Activated CD8-positive, alpha-beta T cell treated with anti-CD3 and anti-CD28 coated beads, Interleukin-2, amount 10 ng/mL, durations not matched to agents 7 days and 5 days (primary cell): ENCODE measurements at regions of chrX and their contacts with region 1.

Region 1: GRCh38 chrX:10119399-10119990 is 37.3 kb upstream of the CLCN4 start:
- DNase-seq: peak; percentile 80
- ATAC-seq: peak; percentile 62
- H3K4me3 Mint-ChIP-seq: no peak overlapping the region
- H3K27ac Mint-ChIP-seq: no peak overlapping the region
- H3K4me1 Mint-ChIP-seq: peaks cover 25% of the 10 kb centered on the region
- H3K27me3 Mint-ChIP-seq: no peaks in the 10 kb centered on the region

Region 2: DNA sequence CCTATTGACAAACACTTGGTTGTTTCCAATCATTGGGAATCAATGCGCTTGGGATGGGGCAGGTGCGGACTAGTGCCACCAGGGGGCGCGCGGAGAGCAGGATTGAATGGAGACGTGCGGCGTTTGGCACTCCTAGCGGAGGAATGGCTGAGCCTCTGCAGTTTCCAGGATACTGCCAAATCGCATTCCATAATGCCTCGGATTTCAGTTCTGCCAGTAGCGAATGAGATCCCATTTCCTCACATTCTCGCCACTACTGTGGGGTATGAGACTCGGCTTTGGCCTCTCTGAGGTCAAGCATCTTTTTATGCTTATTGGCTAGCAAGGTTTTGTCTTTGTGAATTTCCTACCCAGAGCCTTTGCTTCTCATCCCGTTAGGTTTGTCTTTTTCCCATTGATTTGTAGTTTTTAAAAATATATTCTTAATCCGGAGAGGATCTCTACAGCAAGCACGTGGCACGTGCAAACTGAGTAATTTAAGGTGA is 123.6 kb before region 1 on chrX:
- CTCF ChIA-PET with region 1: interaction called, 70 read pairs
- POLR2A ChIA-PET with region 1: interaction called, 3 read pairs
- DNase-seq: peak; percentile 77
- ATAC-seq: peak; percentile 82
- H3K4me3 Mint-ChIP-seq: no peak overlapping the region
- H3K27ac Mint-ChIP-seq: no peak overlapping the region
- H3K4me1 Mint-ChIP-seq: no peaks in the 10 kb centered on the region
- H3K27me3 Mint-ChIP-seq: no peaks in the 10 kb centered on the region

Region 3: DNA sequence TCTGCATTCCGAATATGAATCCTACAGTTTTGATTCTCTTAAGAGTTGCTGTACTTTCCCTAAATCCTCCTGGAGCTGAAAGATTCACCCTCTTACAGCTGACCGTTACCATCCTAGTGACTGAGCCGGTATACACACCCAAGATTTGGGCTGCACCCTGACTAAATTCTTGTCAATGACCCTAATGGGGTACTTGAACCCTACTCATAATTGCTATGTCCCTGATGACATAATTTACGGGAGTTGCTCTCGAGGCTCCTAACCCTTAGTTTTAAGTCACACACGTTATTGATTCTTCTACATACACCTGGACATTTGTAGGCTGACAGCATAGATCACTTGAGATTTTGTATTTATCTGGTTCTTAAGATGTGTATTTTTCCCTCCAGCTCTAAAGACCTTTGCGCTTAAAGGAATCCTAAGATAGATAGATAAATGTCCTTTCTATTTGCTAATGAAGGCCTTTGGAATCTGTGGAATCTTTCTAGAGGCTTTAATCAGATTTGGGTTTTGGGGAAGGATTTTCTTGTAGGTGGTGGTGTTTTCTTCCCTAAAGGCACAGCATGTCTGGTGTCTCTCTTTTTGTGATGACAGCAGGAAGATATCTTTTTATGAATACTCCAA is 114.5 kb before region 1 on chrX:
- CTCF ChIA-PET with region 1: interaction called, 70 read pairs
- POLR2A ChIA-PET with region 1: interaction called, 3 read pairs
- DNase-seq: no peak
- ATAC-seq: no peak
- H3K4me3 Mint-ChIP-seq: no peak overlapping the region
- H3K27ac Mint-ChIP-seq: no peak overlapping the region
- H3K4me1 Mint-ChIP-seq: peaks cover 10% of the 10 kb centered on the region
- H3K27me3 Mint-ChIP-seq: peaks cover 2% of the 10 kb centered on the region

Region 4: GRCh38 chrX:10015726-10016518 is 103.6 kb before region 1 on chrX:
- CTCF ChIA-PET with region 1: interaction called, 22 read pairs
- POLR2A ChIA-PET with region 1: interaction called, 4 read pairs
- DNase-seq: no peak
- ATAC-seq: peak; percentile 20
- H3K4me3 Mint-ChIP-seq: peak overlapping the region; percentile 51
- H3K27ac Mint-ChIP-seq: peak overlapping the region; percentile 20
- H3K4me1 Mint-ChIP-seq: peaks cover 34% of the 10 kb centered on the region
- H3K27me3 Mint-ChIP-seq: peaks cover 5% of the 10 kb centered on the region

Region 5: DNA sequence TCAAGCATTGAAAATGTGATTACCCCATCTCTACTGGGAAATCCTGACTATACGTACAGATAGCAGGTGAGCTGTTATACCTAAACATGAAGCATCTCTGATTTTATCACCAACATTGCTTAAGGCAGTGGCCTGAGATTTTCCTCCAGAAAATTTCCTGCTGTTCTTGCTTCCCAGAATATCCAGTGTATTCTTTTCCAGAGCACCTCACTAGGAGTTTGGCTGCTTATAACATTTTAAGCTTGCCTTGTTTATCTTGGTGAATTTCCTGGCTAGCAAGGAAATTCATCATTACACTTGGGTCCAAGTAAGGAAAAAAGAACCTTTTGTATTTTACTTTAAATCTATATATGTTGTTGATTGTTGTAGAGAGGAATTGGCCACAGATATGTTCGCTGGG is 35.7 kb before region 1 on chrX:
- CTCF ChIA-PET with region 1: interaction called, 15 read pairs
- POLR2A ChIA-PET with region 1: no interaction called
- DNase-seq: no peak
- ATAC-seq: no peak
- H3K4me3 Mint-ChIP-seq: no peak overlapping the region
- H3K27ac Mint-ChIP-seq: peak overlapping the region; percentile 46
- H3K4me1 Mint-ChIP-seq: peaks cover 41% of the 10 kb centered on the region
- H3K27me3 Mint-ChIP-seq: no peaks in the 10 kb centered on the region